Activated CD4-positive, alpha-beta T cell treated with anti-CD3 and anti-CD28 coated beads, Interleukin-2, amount 10 ng/mL, durations not matched to agents 7 days and 5 days (primary cell): ENCODE measurements at regions of chr1 and their contacts with region 1.

Region 1: GRCh38 chr1:151070474-151071276 is at the start of gene GABPB2:
- DNase-seq: peak; percentile 86
- H3K4me3 Mint-ChIP-seq: peak within 1 kb of the TSS; percentile 97
- H3K27ac Mint-ChIP-seq: peak within 1 kb of the TSS; percentile 99
- H3K4me1 Mint-ChIP-seq: peaks cover 24% of the 10 kb centered on the region
- H3K27me3 Mint-ChIP-seq: no peaks in the 10 kb centered on the region
- total RNA-seq, gene GABPB2: 28.1 to 30.9 TPM

Region 2: DNA sequence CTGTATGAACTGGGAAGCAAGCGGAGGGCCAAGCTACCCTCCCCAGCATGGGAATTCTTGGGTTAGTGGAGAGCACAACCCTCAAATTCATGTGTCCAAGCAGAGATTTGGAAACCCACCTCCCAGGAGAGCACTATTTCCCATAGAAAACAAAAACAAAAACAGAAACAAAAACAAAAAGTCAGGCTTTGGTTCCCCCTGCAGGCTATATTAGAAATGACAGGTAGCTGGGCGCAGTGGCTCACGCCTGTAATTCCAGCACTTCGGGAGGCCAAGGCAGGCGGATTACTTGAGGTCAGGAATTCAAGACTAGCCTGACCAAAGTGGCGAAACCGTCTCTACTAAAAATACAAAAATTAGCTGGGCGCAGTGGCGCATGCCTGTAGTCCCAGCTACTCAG is 74.8 kb before region 1 on chr1:
- CTCF ChIA-PET with region 1: no interaction called
- POLR2A ChIA-PET with region 1: no interaction called
- DNase-seq: peak; percentile 46
- H3K4me3 Mint-ChIP-seq: no peak overlapping the region
- H3K27ac Mint-ChIP-seq: no peak overlapping the region
- H3K4me1 Mint-ChIP-seq: peaks cover 21% of the 10 kb centered on the region
- H3K27me3 Mint-ChIP-seq: no peaks in the 10 kb centered on the region

Region 3: GRCh38 chr1:151059078-151059907 is 11.4 kb before region 1 on chr1 and contains the start of gene CDC42SE1:
- CTCF ChIA-PET with region 1: interaction called, 15 read pairs
- POLR2A ChIA-PET with region 1: interaction called, 4 read pairs
- DNase-seq: peak; percentile 85
- H3K4me3 Mint-ChIP-seq: peak within 1 kb of the TSS; percentile 99
- H3K27ac Mint-ChIP-seq: peak within 1 kb of the TSS; percentile 96
- H3K4me1 Mint-ChIP-seq: peaks cover 56% of the 10 kb centered on the region
- H3K27me3 Mint-ChIP-seq: no peaks in the 10 kb centered on the region
- total RNA-seq, gene CDC42SE1: 350 to 360 TPM

Region 4: DNA sequence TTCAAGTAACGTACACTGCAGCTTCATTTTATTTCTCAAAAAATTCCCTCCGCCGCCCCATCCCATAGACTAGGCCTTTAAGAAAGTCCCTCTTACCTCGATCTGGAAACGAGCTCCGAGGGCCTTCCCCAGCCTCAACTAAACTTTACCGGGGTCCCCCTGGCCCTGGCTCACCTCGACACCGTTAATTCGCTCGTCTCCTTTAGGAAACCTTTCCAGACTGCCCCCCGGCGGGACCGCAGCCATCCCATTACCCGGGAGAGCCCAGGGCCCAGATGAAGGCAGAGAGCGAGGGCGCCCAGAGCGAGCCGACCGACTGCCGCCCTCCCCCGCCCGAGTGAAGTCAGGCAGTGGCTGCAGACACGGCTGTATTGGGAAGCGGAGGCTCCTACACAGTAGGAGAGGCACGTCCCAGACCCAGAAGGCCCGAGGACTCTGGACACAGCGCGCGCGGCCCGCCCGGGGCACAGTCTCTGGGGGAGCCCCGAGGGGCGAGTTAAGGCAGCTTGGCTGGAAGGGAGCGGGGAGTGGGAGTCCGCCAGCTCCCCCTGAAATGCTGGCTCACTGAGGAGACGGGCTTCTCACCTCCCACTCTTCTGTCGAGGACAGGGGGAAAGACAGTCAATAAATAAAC is 61.1 kb after region 1 on chr1:
- CTCF ChIA-PET with region 1: interaction called, 4 read pairs
- POLR2A ChIA-PET with region 1: interaction called, 10 read pairs
- DNase-seq: no peak
- H3K4me3 Mint-ChIP-seq: peak overlapping the region; percentile 60
- H3K27ac Mint-ChIP-seq: peak overlapping the region; percentile 81
- H3K4me1 Mint-ChIP-seq: peaks cover 21% of the 10 kb centered on the region
- H3K27me3 Mint-ChIP-seq: peaks cover 9% of the 10 kb centered on the region